ENCODE measurements at regions of chr5 and their contacts with region 1.

Region 1: GRCh38 chr5:138352071-138352721 is at the start of gene KDM3B:
- DNase-seq: peak; percentile 94
- ATAC-seq: peak; percentile 86
- H3K4me3 ChIP-seq: peak within 1 kb of the TSS; percentile 78 to 96 (median 89)
- H3K4me3 Mint-ChIP-seq: peak within 1 kb of the TSS; percentile 95
- H3K27ac ChIP-seq: peak within 1 kb of the TSS; percentile 97
- H3K27ac Mint-ChIP-seq: peak within 1 kb of the TSS; percentile 96
- H3K4me1 ChIP-seq: peaks cover 25 to 30% of the 10 kb centered on the region in 2 donors
- H3K4me1 Mint-ChIP-seq: peaks cover 46% of the 10 kb centered on the region
- H3K27me3 ChIP-seq: no peaks in the 10 kb centered on the region
- H3K27me3 Mint-ChIP-seq: no peaks in the 10 kb centered on the region
- CTCF ChIP-seq: peak; percentile 90
- total RNA-seq, gene KDM3B: 99.9 and 110 TPM in 2 replicates

Region 2: GRCh38 chr5:138178516-138179276 is 173.5 kb before region 1 on chr5 and contains the starts of genes BRD8 and KIF20A:
- CTCF ChIA-PET with region 1: interaction called, 7 read pairs
- POLR2A ChIA-PET with region 1: no interaction called
- intact Hi-C with region 1: loop called (anchors 1 kb)
- DNase-seq: peak; percentile 93
- ATAC-seq: peak; percentile 93
- H3K4me3 ChIP-seq: peak within 1 kb of the TSS; percentile 73 to 99 (median 87)
- H3K4me3 Mint-ChIP-seq: peak within 1 kb of the TSS; percentile 76
- H3K27ac ChIP-seq: peak within 1 kb of the TSS; percentile 37 to 76
- H3K27ac Mint-ChIP-seq: peak within 1 kb of the TSS; percentile 32
- H3K4me1 ChIP-seq: peaks cover 11 to 18% of the 10 kb centered on the region in 2 donors
- H3K4me1 Mint-ChIP-seq: peaks cover 9% of the 10 kb centered on the region
- H3K27me3 ChIP-seq: no peaks in the 10 kb centered on the region
- H3K27me3 Mint-ChIP-seq: no peaks in the 10 kb centered on the region
- CTCF ChIP-seq: no peak
- total RNA-seq, gene BRD8: 98.9 and 114 TPM in 2 replicates
- total RNA-seq, gene KIF20A: 0.47 TPM in 1 of 2 replicates, not detected in the other

Region 3: DNA sequence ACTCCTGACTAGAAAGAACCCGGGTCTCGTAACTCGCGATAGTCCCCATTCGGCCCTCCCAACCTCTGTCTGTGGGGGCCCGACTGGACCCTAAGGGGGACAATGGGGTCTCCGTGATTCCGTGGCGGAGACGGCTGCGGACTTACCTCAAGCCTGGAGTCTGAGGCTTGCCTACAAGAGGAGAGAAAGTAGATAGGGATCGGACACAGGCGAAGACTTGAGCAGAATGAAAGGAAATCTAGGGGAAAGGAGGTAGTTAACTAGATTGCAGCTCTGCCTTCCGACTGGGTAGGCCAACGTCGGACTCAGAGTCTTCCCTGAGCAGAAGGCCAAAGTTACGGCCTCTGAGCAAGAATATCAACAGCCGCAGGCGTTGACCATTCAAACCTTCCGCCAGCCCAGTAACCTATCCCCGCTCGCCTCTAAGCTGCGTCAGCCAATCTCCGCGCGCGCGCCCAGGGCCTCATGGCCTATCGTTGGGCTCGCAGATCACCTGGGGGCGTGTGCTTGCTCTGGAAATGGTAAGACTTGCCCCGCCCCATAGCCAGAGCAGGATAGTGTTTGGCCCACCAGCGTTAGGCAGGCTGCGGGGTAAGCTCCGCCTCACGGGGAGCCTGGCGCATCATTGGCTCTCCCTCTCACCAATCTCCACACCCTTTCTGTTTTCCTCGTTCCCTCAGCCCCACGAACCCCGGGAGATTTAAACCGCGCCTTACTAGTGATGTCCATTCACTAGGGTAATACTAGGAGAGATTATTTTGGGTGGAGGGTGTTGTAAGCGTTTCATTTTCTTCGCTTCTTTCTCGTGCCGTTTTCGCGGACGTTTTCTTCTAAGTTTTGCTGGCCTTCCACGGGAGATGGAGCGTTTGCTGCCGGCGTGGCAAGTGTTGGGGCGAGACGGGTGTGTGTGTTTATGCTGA is 20.5 kb before region 1 on chr5 and contains the start of gene CDC25C:
- CTCF ChIA-PET with region 1: interaction called, 278 read pairs
- POLR2A ChIA-PET with region 1: interaction called, 6 read pairs
- intact Hi-C with region 1: loop called (anchors 1 kb)
- DNase-seq: peak; percentile 97
- ATAC-seq: peak; percentile 100
- H3K4me3 ChIP-seq: peak within 1 kb of the TSS; percentile 60 to 75 (median 72)
- H3K4me3 Mint-ChIP-seq: peak within 1 kb of the TSS; percentile 87
- H3K27ac ChIP-seq: peak within 1 kb of the TSS in 1 of 2 donors; percentile 23
- H3K27ac Mint-ChIP-seq: peak within 1 kb of the TSS; percentile 61
- H3K4me1 ChIP-seq: peaks cover 7 to 15% of the 10 kb centered on the region in 2 donors
- H3K4me1 Mint-ChIP-seq: peaks cover 14% of the 10 kb centered on the region
- H3K27me3 ChIP-seq: no peaks in the 10 kb centered on the region
- H3K27me3 Mint-ChIP-seq: no peaks in the 10 kb centered on the region
- CTCF ChIP-seq: no peak
- total RNA-seq, gene CDC25C: not detected in 2 replicates

Region 4: DNA sequence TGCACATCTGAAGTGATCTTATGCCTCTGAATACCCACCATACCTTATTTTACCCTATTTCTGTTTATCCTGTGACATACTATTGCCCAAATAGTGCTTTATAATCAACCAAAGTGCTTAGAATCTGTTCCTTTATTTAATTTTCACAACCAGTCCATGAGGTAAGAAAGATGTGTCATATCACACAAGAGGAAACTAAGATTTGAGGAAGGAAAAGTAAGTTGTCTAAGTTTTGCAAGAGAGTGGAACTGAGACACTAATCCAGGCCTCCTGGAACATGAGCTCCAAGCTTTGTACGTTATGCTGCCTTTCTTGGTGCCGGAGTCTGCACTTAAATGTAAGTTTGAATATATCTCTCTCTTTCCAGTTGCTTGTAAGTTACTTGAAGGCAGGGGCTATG is 17.5 kb after region 1 on chr5:
- CTCF ChIA-PET with region 1: interaction called, 39 read pairs
- POLR2A ChIA-PET with region 1: interaction called, 7 read pairs
- intact Hi-C with region 1: no loop called
- DNase-seq: no peak
- ATAC-seq: no peak
- H3K4me3 ChIP-seq: no peak overlapping the region
- H3K4me3 Mint-ChIP-seq: peak overlapping the region; percentile 1
- H3K27ac ChIP-seq: peak overlapping the region in 1 of 2 donors; percentile 37
- H3K27ac Mint-ChIP-seq: peak overlapping the region; percentile 27
- H3K4me1 ChIP-seq: peaks cover 21 to 23% of the 10 kb centered on the region in 2 donors
- H3K4me1 Mint-ChIP-seq: peaks cover 42% of the 10 kb centered on the region
- H3K27me3 ChIP-seq: no peaks in the 10 kb centered on the region
- H3K27me3 Mint-ChIP-seq: no peaks in the 10 kb centered on the region
- CTCF ChIP-seq: no peak

Region 5: GRCh38 chr5:138542956-138543729 is 190.9 kb after region 1 on chr5 and contains the start of gene ETF1:
- CTCF ChIA-PET with region 1: interaction called, 14 read pairs
- POLR2A ChIA-PET with region 1: interaction called, 12 read pairs
- intact Hi-C with region 1: loop called (anchors 1 kb)
- DNase-seq: peak; percentile 100
- ATAC-seq: peak; percentile 91
- H3K4me3 ChIP-seq: peak within 1 kb of the TSS; percentile 92 to 99 (median 95)
- H3K4me3 Mint-ChIP-seq: peak within 1 kb of the TSS; percentile 94
- H3K27ac ChIP-seq: peak within 1 kb of the TSS; percentile 100
- H3K27ac Mint-ChIP-seq: peak within 1 kb of the TSS; percentile 100
- H3K4me1 ChIP-seq: peaks cover 33 to 46% of the 10 kb centered on the region in 2 donors
- H3K4me1 Mint-ChIP-seq: peaks cover 74% of the 10 kb centered on the region
- H3K27me3 ChIP-seq: no peaks in the 10 kb centered on the region
- H3K27me3 Mint-ChIP-seq: no peaks in the 10 kb centered on the region
- CTCF ChIP-seq: no peak
- total RNA-seq, gene ETF1: 50.5 and 50.8 TPM in 2 replicates

Region 6: GRCh38 chr5:139273572-139274289 is 921.5 kb after region 1 on chr5:
- CTCF ChIA-PET with region 1: interaction called, 3 read pairs
- POLR2A ChIA-PET with region 1: no interaction called
- intact Hi-C with region 1: loop called (anchors 10 kb)
- DNase-seq: peak; percentile 95
- ATAC-seq: peak; percentile 98
- H3K4me3 ChIP-seq: peak overlapping the region; percentile 61 to 86 (median 75)
- H3K4me3 Mint-ChIP-seq: peak overlapping the region; percentile 92
- H3K27ac ChIP-seq: peak overlapping the region; percentile 62 to 74
- H3K27ac Mint-ChIP-seq: peak overlapping the region; percentile 91
- H3K4me1 ChIP-seq: peaks cover 32 to 44% of the 10 kb centered on the region in 2 donors
- H3K4me1 Mint-ChIP-seq: peaks cover 46% of the 10 kb centered on the region
- H3K27me3 ChIP-seq: no peaks in the 10 kb centered on the region
- H3K27me3 Mint-ChIP-seq: no peaks in the 10 kb centered on the region
- CTCF ChIP-seq: no peak

Measured in B cell (primary cell).